Endothelial cell of umbilical vein (primary cell): ENCODE measurements at regions of chr19 and their contacts with region 1.

Region 1: DNA sequence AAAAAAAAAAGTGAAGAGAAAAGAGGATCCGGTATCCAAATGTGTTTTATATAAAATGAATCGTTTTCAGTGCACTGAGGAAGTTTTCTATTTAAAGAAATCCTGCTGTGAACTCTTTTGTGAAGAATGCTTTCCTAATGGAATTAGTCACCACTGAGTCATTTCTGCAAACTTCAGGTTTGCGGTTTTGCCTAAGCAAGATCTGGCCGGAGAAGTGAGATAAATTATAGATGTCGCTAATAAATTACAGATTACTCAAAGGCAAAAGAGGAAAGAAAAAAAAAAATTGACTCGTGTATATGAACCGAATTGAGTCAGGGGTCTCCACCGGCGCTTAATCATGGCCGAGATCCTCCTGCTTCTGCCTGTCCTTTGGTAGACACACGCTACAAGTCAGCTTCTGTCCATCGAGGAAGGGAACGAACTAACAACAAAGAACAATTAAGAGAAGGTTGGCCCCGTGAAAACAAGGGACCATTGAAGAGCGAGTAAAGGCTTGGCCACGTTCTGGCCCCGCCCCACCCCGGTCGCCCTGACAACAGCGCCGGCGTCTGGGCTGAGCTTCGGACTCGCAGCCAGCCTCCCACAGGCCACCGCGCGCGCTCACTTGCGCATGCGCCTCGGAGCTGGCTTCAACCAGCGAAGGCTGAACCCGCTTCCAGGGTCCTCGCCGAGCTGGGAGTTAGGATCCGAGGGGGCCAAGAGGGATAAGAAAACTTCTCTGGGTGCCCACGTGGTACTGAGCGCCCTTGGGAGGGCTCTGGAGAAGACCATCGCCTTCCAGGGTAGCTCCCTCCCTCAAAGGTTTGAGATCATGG is 33.0 kb upstream of the MRI1 start:
- DNase-seq: peak; percentile 97
- H3K4me3 ChIP-seq: peak overlapping the region; percentile 19 to 75 (median 39)
- H3K27ac ChIP-seq: peak overlapping the region; percentile 98
- H3K4me1 ChIP-seq: peaks cover 23% of the 10 kb centered on the region
- H3K27me3 ChIP-seq: no peaks in the 10 kb centered on the region
- CTCF ChIP-seq: no peak
- POLR2A ChIP-seq: peak; percentile 89

Region 2: GRCh38 chr19:13162518-13163314 is 568.6 kb before region 1 on chr19:
- CTCF ChIA-PET with region 1: no interaction called
- POLR2A ChIA-PET with region 1: no interaction called
- dilution Hi-C with region 1: no loop called
- intact Hi-C with region 1: loop called (anchors 5 kb)
- DNase-seq: peak; percentile 97
- H3K4me3 ChIP-seq: peak overlapping the region in 1 of 3 experiments; percentile 28
- H3K27ac ChIP-seq: peak overlapping the region; percentile 99
- H3K4me1 ChIP-seq: peaks cover 42% of the 10 kb centered on the region
- H3K27me3 ChIP-seq: no peaks in the 10 kb centered on the region
- CTCF ChIP-seq: no peak
- POLR2A ChIP-seq: peak; percentile 69

Region 3: GRCh38 chr19:13748169-13748828 is 16.9 kb after region 1 on chr19:
- CTCF ChIA-PET with region 1: interaction called, 7 read pairs
- POLR2A ChIA-PET with region 1: interaction called, 7 read pairs
- dilution Hi-C with region 1: no loop called
- intact Hi-C with region 1: loop called (anchors 1 kb)
- DNase-seq: peak; percentile 42
- H3K4me3 ChIP-seq: peak overlapping the region; percentile 85 to 93 (median 85)
- H3K27ac ChIP-seq: peak overlapping the region; percentile 82
- H3K4me1 ChIP-seq: peaks cover 13% of the 10 kb centered on the region
- H3K27me3 ChIP-seq: no peaks in the 10 kb centered on the region
- CTCF ChIP-seq: no peak
- POLR2A ChIP-seq: peak; percentile 61

Region 4: DNA sequence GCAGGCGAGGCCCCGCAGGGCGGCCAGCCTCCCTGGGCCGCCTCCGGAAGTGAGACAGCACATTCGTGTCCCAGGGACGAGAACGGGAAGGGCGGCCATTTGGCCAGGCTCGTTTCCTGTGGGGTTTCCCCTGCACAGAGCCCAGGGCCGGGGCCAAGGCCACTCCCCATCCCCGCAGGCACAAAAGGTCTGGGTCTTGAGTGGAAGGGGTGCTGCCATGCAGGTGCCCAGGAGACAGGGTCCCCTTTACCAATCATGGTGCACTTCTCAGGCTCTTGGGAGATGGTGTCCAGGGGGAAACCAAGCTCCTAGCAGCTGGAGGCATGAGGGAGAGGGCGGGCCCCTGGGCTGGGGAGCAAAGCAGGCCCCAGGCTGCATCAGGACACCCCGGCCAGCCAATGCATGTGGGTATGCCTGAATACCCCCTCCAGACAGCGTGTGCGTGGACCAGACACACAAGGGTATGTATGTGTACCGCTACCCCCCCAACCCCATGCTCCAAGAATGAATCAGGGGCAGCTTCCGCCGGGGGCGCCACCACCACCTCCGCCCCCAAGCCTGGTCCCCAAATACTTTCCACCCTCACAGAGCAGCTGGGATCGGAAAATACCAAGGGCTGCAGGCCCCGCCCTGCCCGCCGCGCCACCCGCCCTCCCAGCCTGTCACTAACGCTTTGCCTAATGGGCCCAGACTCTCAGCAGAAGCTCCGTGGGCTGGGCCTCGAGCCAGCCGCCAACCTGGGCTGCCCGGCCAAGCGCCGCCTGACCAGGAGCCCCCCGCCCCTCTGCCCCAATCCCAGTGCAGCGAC is 108.0 kb after region 1 on chr19:
- CTCF ChIA-PET with region 1: no interaction called
- POLR2A ChIA-PET with region 1: interaction called, 3 read pairs
- dilution Hi-C with region 1: no loop called
- intact Hi-C with region 1: loop called (anchors 2 kb)
- DNase-seq: peak; percentile 87
- H3K4me3 ChIP-seq: peak overlapping the region in 2 of 3 experiments; percentile 79 to 82
- H3K27ac ChIP-seq: peak overlapping the region; percentile 94
- H3K4me1 ChIP-seq: peaks cover 39% of the 10 kb centered on the region
- H3K27me3 ChIP-seq: no peaks in the 10 kb centered on the region
- CTCF ChIP-seq: no peak
- POLR2A ChIP-seq: peak; percentile 77

Region 5: DNA sequence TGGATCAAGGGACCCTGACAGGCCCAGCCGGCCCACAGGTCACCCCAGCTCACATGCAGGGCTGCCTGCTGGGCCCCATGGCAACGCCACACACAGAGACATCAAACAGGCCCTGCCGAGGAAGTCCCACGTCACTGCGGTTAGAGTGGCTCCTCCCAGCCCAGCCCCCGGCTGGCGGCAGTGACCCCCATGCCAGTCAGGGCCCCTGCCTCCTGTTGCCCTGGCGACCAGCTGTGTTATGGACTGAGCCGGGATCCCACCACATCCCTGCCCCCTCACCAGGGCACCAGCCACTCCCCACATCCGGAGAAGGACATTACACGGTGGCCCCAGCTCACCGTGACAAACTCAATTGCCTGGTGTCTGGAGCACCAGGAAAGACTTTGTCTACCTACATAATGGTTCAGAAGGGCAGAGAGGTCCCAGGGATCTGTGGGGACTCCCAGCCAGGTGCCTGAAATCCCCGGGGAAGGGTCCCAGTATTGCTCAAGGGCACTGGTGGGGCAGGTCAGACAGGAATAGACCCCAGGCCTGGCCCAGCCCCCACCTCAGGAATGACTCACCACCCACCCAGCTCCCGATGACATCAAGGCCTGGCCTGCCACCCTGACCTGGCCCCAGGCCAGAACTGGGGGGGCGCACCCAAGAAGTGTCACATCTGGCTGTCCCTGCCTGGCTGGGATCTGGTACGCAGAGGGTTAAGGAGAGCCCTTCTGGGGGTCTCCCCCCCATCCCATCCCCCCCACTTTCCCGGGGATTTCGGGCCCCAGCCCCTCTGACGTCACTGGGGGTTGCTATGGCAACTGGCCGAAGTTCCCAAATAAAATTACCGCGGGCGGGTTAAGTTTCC is 115.4 kb after region 1 on chr19:
- CTCF ChIA-PET with region 1: no interaction called
- POLR2A ChIA-PET with region 1: no interaction called
- dilution Hi-C with region 1: no loop called
- intact Hi-C with region 1: loop called (anchors 2 kb)
- DNase-seq: peak; percentile 88
- H3K4me3 ChIP-seq: peak overlapping the region in 1 of 3 experiments; percentile 48
- H3K27ac ChIP-seq: peak overlapping the region; percentile 99
- H3K4me1 ChIP-seq: peaks cover 43% of the 10 kb centered on the region
- H3K27me3 ChIP-seq: no peaks in the 10 kb centered on the region
- CTCF ChIP-seq: no peak
- POLR2A ChIP-seq: no peak